MCF 10A (cell line): ENCODE measurements at regions of chr7 and their contacts with region 1.

Region 1: DNA sequence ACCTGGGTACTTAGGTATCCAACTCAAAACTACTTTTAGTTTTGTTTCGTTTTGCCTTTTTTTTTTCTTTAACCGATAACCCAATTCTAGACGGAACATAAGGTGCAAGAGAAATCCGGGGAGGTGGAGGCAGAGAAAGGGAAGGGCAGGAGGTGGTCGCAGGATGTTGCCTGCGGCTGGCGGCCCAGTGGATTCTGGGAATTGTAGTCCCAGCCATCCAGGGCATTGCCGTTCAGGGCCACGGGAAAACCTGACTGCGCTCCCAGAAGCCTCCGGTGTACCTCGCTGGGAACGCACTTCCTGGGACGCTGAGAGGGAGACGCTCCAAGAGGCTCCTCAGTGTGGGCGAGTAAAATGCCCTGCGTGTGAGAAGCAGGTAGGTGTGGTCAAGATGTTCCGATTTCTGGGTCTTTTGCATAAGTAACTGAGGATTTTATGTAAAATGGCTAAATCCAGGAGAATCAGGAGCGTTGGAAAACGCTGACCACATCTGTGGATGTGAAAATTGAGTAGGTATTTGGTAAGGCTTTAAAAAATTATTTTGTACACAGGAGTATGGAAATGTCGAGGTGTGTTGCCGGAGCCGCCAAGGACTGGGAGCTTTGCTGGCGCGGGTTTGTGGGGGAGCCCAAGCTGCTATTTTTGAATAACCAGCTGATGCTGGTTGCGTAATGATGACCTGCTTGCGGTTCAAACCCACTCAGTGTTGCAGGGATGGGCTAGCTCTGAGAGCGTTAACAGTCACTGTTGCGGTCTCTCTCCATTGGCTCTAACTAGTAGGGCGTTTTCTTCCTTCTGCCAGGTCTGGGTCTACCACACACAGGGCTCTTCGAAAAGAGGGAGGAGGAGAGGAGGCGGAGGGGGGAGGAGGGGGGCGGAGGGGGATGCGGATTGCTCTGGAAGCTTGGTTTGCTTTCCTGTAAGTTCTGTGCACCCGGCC is at the start of gene CLDN12:
- DNase-seq: peak; percentile 94
- H3K4me3 Mint-ChIP-seq: peak within 1 kb of the TSS; percentile 88
- H3K27ac Mint-ChIP-seq: peak within 1 kb of the TSS; percentile 96
- H3K4me1 Mint-ChIP-seq: peaks cover 6% of the 10 kb centered on the region
- H3K27me3 Mint-ChIP-seq: no peaks in the 10 kb centered on the region
- CTCF ChIP-seq: no peak
- total RNA-seq, gene CLDN12: 22.5 and 39.2 TPM in 2 replicates

Region 2: GRCh38 chr7:90346336-90347125 is 56.9 kb before region 1 on chr7 and contains the start of gene GTPBP10:
- CTCF ChIA-PET with region 1: interaction called, 5 read pairs
- POLR2A ChIA-PET with region 1: interaction called, 18 read pairs
- intact Hi-C with region 1: loop called (anchors 1 kb)
- DNase-seq: peak; percentile 91
- H3K4me3 Mint-ChIP-seq: peak within 1 kb of the TSS; percentile 94
- H3K27ac Mint-ChIP-seq: peak within 1 kb of the TSS; percentile 95
- H3K4me1 Mint-ChIP-seq: peaks cover 20% of the 10 kb centered on the region
- H3K27me3 Mint-ChIP-seq: no peaks in the 10 kb centered on the region
- CTCF ChIP-seq: peak; percentile 58
- total RNA-seq, gene GTPBP10: 41.6 and 51.1 TPM in 2 replicates

Region 3: DNA sequence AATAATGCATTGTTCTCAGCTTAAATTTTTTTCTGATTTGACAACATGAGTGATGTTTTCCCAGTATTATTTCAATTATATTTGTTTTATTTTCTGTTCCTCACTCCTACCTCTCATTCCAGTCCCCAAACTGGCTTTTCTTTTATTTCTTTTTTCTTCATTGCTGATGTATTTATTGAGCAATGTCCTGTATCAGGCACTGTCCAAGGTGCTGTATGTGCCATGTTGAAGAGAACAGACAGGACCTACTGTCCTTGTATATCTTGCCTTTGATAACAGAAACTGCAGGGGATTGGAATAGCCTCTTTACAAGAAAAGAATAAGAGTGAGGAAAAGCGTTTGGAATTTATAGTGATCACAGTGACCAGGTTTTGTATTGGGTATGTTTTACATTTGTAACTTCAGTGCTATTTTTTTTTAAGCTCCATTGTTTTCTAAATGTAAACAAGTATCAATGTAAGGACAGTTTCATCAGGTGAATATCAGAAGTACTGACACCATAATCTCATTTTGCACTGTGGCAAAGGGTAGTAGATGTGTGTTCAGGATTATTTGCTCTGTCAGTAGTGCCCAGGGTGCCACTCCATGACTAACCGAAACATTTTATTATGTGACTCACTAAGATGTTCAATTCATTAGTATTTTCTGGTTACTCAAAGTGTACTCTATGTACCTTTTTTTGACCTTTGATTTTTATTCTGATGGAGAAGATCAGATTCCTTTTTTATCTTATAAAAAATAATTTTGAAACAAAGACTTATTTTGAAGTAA is 15.8 kb before region 1 on chr7:
- CTCF ChIA-PET with region 1: interaction called, 3 read pairs
- POLR2A ChIA-PET with region 1: interaction called, 10 read pairs
- intact Hi-C with region 1: no loop called
- DNase-seq: peak; percentile 34
- H3K4me3 Mint-ChIP-seq: no peak overlapping the region
- H3K27ac Mint-ChIP-seq: no peak overlapping the region
- H3K4me1 Mint-ChIP-seq: peaks cover 15% of the 10 kb centered on the region
- H3K27me3 Mint-ChIP-seq: no peaks in the 10 kb centered on the region
- CTCF ChIP-seq: no peak

Region 4: GRCh38 chr7:90512821-90513254 is 109.4 kb after region 1 on chr7:
- CTCF ChIA-PET with region 1: no interaction called
- POLR2A ChIA-PET with region 1: no interaction called
- intact Hi-C with region 1: no loop called
- DNase-seq: no peak
- H3K4me3 Mint-ChIP-seq: no peak overlapping the region
- H3K27ac Mint-ChIP-seq: no peak overlapping the region
- H3K4me1 Mint-ChIP-seq: no peaks in the 10 kb centered on the region
- H3K27me3 Mint-ChIP-seq: no peaks in the 10 kb centered on the region
- CTCF ChIP-seq: no peak